ENCODE measurements at regions of chr9 and their contacts with region 1.

Region 1: DNA sequence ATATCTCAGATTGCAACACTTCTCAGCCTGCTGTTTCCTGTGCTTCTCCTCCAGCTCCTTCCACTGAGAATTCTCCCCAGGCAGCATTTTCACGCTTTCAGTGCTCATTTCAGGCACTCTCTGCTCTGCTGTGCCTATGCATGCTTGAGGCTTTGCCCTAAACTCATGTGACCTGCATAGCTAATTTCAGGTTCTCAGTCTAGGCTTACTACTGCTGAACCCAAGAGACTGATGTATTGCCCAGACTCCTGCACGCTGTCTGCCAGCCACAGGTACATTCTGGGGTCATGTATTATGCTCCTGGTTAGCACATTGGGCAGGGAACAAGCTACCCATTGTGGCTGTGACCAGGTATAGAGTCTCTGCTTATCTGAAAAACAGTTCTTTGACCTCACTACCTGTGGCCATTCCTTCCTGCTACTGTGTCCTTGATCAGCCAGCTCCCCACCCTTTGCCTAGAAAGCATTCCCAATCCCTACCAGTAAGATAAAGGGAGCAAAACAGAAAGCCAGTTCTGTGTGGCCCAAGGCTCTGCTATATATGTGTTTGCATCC is 34.7 kb downstream of the PIP5K1B start:
- DNase-seq: no peak
- H3K4me3 ChIP-seq: no peak overlapping the region
- H3K27ac ChIP-seq: no peak overlapping the region
- H3K4me1 ChIP-seq: no peaks in the 10 kb centered on the region
- H3K27me3 ChIP-seq: no peaks in the 10 kb centered on the region
- CTCF ChIP-seq: no peak
- POLR2A ChIP-seq: no peak

Region 2: GRCh38 chr9:68515326-68515901 is 224.3 kb before region 1 on chr9:
- intact Hi-C with region 1: no loop called
- DNase-seq: no peak
- H3K4me3 ChIP-seq: no peak overlapping the region
- H3K27ac ChIP-seq: no peak overlapping the region
- H3K4me1 ChIP-seq: no peaks in the 10 kb centered on the region
- H3K27me3 ChIP-seq: no peaks in the 10 kb centered on the region
- CTCF ChIP-seq: no peak
- POLR2A ChIP-seq: no peak

Region 3: DNA sequence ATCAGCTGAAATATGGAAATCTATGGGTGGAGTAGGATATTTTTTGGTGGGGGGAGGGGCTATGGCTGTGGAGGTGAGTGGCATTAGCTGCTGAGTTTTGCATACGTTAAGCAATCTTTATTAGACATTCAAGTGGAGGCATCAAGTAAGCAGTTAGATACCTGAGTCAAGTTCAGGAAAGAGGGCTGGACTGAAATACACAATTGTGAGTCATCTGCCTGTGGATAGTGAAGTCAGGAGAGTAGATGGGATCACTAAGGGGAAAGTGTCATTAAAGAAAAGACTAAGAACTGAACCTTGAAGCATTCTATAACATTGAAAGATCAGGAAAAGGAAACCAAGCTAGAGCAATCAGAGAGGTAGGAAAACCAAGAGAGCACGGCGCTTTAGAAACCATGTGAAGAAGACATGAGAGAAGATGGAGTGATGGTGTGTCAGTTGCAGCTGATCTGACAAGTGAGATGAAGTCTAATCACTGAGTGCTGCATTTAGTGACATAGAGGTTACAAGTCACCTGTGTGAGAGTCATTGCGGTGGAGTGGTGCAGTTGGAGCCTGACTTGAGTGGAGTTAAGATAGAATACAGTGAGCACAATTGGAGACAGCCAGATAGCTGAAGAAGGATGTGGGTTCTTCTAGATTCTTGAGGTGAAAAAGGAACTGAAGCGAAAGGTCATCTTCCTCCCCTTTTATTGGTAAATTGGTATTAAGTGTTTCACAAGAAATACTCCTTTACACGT is 54.1 kb after region 1 on chr9:
- intact Hi-C with region 1: loop called (anchors 10 kb)
- DNase-seq: no peak
- H3K4me3 ChIP-seq: no peak overlapping the region
- H3K27ac ChIP-seq: no peak overlapping the region
- H3K4me1 ChIP-seq: no peaks in the 10 kb centered on the region
- H3K27me3 ChIP-seq: no peaks in the 10 kb centered on the region
- CTCF ChIP-seq: no peak
- POLR2A ChIP-seq: no peak

Measured in thyroid gland (tissue), 4 donors.